ENCODE measurements at regions of chr6 and their contacts with region 1.

Region 1: GRCh38 chr6:152124429-152125074 is 317.1 kb downstream of the ESR1 start:
- DNase-seq: peak; percentile 43 to 50 (median 44)
- ATAC-seq: peak; percentile 80
- H3K4me3 ChIP-seq: no peak overlapping the region
- H3K27ac ChIP-seq: no peak overlapping the region
- H3K4me1 ChIP-seq: peaks cover 0 to 3% of the 10 kb centered on the region in 2 experiments; a peak in 1 of 5 replicates
- H3K27me3 ChIP-seq: peaks cover 2 to 14% of the 10 kb centered on the region in 2 experiments; a peak in 2 of 5 replicates
- CTCF ChIP-seq: peak; percentile 39 to 75 (median 56); a peak in 5 of 6 replicates
- EP300 ChIP-seq: no peak
- POLR2A ChIP-seq: no peak
- RAD21 ChIP-seq: peak; percentile 59 to 73; a peak in 3 of 4 replicates

Region 2: DNA sequence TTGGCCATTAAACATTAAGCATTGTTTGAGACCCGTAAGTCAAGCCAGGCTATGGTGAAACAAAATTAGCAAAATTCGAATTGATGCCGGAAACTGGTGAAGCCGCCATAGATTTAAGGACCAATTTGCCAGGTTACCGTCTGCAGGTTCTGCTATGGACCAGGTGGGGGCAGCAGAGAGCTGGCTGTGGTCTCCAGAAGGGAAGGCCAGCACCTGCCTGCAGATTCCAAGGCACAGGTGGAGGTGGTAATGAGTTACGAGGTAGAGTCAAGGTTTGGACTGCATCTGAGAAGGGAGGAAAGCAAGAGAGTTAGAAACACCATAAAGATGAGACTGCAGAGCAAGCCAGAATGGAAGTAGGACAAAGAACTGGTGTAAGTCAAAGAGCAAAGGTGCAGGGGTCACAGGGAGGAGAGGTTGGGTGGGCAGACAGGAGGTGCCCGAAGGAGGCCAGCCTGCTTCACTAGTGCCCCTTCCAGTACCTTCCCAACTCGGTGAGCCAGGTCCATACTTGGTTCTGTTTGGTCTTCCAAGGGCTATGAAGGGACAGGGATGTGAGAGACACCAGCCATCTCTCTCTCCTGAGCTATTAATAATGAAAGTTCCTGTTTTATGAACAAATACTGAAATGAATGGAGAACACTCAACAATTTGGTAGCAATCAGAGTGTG is 448.7 kb before region 1 on chr6:
- CTCF ChIA-PET with region 1: no interaction called
- POLR2A ChIA-PET with region 1: no interaction called
- in situ Hi-C with region 1: no loop called
- intact Hi-C with region 1: loop called (anchors 5 kb)
- DNase-seq: peak; percentile 67 to 85 (median 80)
- ATAC-seq: peak; percentile 93
- H3K4me3 ChIP-seq: no peak overlapping the region
- H3K27ac ChIP-seq: no peak overlapping the region
- H3K4me1 ChIP-seq: no peaks in the 10 kb centered on the region; a peak in 1 of 5 replicates
- H3K27me3 ChIP-seq: peaks cover 0 to 4% of the 10 kb centered on the region in 2 experiments; a peak in 2 of 5 replicates
- CTCF ChIP-seq: peak; percentile 86 to 97 (median 89)
- EP300 ChIP-seq: no peak
- POLR2A ChIP-seq: no peak
- RAD21 ChIP-seq: peak; percentile 76 to 80

Region 3: DNA sequence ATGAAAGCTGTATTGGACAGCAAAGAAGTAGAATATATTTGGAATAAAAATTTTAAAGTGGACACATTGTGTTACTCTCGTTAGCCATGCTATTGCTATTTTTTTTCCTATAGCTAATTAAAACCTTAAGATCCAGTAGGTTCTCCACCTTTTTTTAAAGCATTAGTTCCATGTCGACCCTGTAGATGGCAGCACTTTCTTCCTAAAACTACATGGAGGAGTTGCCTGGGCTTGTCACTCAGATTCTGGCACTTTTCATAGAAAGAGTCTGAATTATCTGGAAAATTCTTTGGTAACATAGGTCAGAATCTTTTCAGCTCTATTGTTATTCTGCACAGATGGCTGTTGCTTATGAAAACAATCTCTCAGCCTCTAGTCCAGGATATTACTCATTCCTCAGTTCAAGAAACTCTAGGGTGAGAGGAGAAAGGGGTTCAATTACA is 359.1 kb before region 1 on chr6:
- CTCF ChIA-PET with region 1: no interaction called
- POLR2A ChIA-PET with region 1: no interaction called
- in situ Hi-C with region 1: no loop called
- intact Hi-C with region 1: loop called (anchors 2 kb)
- DNase-seq: peak; percentile 61 to 69 (median 64)
- ATAC-seq: peak; percentile 91
- H3K4me3 ChIP-seq: no peak overlapping the region
- H3K27ac ChIP-seq: no peak overlapping the region
- H3K4me1 ChIP-seq: no peaks in the 10 kb centered on the region
- H3K27me3 ChIP-seq: no peaks in the 10 kb centered on the region
- CTCF ChIP-seq: peak; percentile 59 to 76 (median 74)
- EP300 ChIP-seq: no peak
- POLR2A ChIP-seq: no peak
- RAD21 ChIP-seq: peak; percentile 42 to 64

Measured in K562 (cell line).